ENCODE measurements at regions of chr4 and their contacts with region 1.

Region 1: GRCh38 chr4:147617173-147617840 is at the start of gene TMEM184C:
- DNase-seq: peak; percentile 95 to 100 (median 98)

Region 2: DNA sequence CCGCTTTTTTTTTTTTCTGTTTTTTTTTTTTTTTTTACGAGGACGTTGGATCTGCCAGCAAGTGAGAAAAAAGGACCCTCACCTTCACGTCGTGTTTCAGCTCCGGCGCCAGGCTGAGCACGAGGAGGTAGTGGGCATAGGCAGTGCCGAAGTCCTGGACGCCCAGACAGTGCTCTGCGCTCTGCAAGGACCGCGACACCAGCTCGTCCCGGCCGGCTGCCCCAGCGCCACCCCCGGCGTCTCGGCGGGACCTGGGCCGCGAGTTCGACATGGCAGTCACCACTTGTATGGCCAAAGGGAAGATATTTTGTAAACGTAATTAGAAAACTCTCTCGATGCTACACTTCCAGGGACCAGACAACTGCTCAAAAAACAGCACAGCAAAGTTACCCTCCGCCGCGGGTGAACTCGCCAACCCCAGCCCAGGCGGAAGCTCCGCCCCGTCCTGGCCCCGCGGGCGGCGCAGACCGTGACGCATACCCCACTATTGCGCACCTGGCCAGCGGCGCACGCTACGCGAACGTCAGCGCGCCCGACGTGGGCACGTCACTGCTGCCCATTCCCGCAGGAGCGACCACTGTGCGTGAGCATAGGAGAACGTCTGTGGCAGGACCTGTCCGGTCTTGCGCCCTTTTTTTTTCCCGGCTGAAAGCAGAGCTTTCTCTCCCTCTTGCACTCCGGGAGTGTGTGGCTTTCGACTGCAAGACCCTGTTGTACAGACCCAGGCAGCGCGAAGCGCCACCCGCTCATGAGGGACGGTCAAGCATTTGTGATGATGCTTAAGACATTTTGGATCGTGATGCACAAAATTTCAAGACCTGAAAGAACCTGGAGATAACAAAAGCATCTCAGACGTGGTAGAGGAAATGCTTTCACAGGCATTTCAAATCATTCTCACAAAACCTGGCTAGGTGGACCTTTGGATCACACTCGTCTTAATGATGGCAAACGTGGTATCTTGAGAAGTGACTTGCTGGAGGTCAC is 66.7 kb after region 1 on chr4 and contains the start of gene PRMT9:
- intact Hi-C with region 1: loop called (anchors 5 kb)
- DNase-seq: peak; percentile 80 to 99 (median 91)

Region 3: GRCh38 chr4:147780137-147780777 is 162.9 kb after region 1 on chr4:
- intact Hi-C with region 1: no loop called
- DNase-seq: no peak